ENCODE measurements at regions of chr1 and their contacts with region 1.

Region 1: GRCh38 chr1:45750298-45751038 is at the start of gene IPP:
- DNase-seq: peak; percentile 98
- ATAC-seq: peak; percentile 98
- H3K4me3 ChIP-seq: peak within 1 kb of the TSS; percentile 93
- H3K27ac ChIP-seq: peak within 1 kb of the TSS; percentile 79
- H3K4me1 ChIP-seq: peaks cover 9% of the 10 kb centered on the region
- H3K27me3 ChIP-seq: no peaks in the 10 kb centered on the region
- CTCF ChIP-seq: no peak
- total RNA-seq, gene IPP: 6.6 and 8.8 TPM in 2 replicates

Region 2: DNA sequence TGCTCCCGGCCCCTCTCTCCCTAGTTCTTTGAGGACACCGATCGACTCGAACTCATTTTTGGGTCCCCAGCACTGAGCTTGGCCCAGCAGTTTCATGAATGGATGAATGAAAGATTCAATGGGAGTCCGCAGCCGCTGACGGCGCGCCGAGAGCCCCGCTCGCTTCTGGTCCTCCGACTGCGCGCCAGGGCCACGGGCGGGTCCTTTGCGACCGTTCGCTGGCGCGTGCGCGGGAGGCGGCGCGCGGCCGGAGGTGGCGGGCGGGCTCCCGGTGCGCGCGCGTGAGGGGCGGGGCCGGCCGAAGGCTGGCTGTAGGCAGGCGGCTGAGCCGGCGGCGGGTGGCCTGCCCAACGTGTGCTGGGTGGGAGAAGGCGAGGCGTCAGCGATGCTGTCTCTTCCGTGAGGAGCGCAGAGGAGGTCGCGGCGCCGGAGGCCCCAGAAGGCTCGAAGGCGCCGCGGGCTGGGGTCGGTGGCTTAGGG is 52.9 kb after region 1 on chr1 and contains the start of gene MAST2:
- CTCF ChIA-PET with region 1: no interaction called
- POLR2A ChIA-PET with region 1: no interaction called
- intact Hi-C with region 1: loop called (anchors 2 kb)
- DNase-seq: peak; percentile 90
- ATAC-seq: peak; percentile 79
- H3K4me3 ChIP-seq: peak within 1 kb of the TSS; percentile 73
- H3K27ac ChIP-seq: peak within 1 kb of the TSS; percentile 56
- H3K4me1 ChIP-seq: peaks cover 22% of the 10 kb centered on the region
- H3K27me3 ChIP-seq: no peaks in the 10 kb centered on the region
- CTCF ChIP-seq: no peak
- total RNA-seq, gene MAST2: 29.3 and 33.7 TPM in 2 replicates

Region 3: DNA sequence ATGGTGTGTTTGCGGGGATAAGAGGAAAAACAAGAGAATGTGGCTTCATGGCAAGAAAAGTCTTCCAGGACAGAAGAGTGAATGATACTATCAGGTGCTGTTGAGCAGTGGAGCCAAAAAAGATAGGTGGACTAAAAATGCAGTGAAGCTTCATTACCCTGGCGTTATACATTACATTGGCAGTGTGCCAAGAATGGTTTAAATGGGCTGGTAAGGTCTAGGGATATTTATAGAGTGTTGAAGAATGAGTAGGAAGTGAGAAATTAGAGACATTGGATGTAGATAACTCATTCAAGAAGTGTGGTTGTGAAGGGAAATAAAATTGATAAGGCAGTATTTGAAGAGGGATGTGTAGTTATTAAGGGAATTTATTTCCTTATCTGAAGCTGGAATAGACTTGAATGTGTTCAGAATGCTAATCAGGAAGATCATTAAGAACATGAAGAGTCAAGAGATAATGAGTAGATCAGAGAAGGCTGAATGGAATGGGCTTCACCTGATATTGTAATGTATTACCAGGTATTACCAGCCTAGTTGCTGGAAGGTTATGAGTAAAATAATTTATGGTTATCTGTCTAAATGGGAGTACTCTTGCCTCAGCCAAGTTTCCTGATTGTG is 125.6 kb after region 1 on chr1:
- CTCF ChIA-PET with region 1: no interaction called
- POLR2A ChIA-PET with region 1: no interaction called
- intact Hi-C with region 1: loop called (anchors 1 kb)
- DNase-seq: no peak
- ATAC-seq: no peak
- H3K4me3 ChIP-seq: no peak overlapping the region
- H3K27ac ChIP-seq: no peak overlapping the region
- H3K4me1 ChIP-seq: peaks cover 23% of the 10 kb centered on the region
- H3K27me3 ChIP-seq: no peaks in the 10 kb centered on the region
- CTCF ChIP-seq: no peak